GM10248 (cell line): ENCODE measurements at regions of chr7 and their contacts with region 1.

Region 1: GRCh38 chr7:100852048-100852872 is at the start of gene SLC12A9:
- DNase-seq: peak; percentile 96
- CTCF ChIP-seq: peak; percentile 90

Region 2: GRCh38 chr7:100793806-100794660 is 58.2 kb before region 1 on chr7:
- CTCF ChIA-PET with region 1: interaction called, 188 read pairs
- POLR2A ChIA-PET with region 1: no interaction called
- DNase-seq: no peak
- CTCF ChIP-seq: no peak

Region 3: DNA sequence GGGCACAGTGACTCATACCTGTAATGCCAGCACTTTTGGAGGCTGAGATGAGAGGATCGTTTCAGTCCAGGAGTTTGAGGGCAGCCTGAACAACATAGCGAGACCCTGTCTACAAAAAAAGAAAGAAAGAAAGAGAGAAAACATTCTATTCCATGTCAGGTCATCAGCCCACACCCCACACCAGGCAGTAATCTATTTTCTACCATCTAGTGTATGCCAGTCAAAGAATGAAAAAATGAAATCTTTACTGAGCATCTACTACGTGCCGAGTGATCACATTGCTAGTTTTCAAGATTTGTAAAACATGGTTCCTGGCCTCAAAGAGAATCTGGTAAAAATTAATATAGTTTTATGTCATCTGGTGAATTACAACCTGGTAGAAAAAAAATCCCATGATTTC is 21.9 kb before region 1 on chr7:
- CTCF ChIA-PET with region 1: interaction called, 19 read pairs
- POLR2A ChIA-PET with region 1: no interaction called
- DNase-seq: no peak
- CTCF ChIP-seq: no peak

Region 4: GRCh38 chr7:100874577-100875355 is 22.5 kb after region 1 on chr7 and contains the start of gene SRRT:
- CTCF ChIA-PET with region 1: interaction called, 15 read pairs
- POLR2A ChIA-PET with region 1: interaction called, 6 read pairs
- DNase-seq: peak; percentile 99
- CTCF ChIP-seq: no peak

Region 5: DNA sequence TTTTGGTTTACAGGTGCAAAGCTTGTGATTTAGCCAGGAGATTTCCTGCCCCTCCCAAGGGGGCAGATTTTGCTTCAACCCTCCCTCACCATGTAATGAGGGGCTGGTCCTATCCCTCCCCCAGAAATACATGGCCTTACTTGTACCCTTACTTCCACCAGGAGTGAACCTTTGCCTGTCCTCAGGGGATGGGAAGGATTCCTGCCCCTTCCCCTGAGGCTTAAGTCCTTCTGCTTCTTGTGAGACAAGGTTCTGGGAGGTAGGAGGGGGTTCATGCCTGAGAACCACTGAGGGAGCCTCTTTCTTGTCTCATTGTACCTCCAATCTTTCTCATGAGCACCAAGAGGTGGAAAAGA is 77.5 kb after region 1 on chr7:
- CTCF ChIA-PET with region 1: no interaction called
- POLR2A ChIA-PET with region 1: no interaction called
- DNase-seq: no peak
- CTCF ChIP-seq: no peak

Region 6: GRCh38 chr7:100965723-100966541 is 113.7 kb after region 1 on chr7:
- CTCF ChIA-PET with region 1: no interaction called
- POLR2A ChIA-PET with region 1: no interaction called
- DNase-seq: peak; percentile 97
- CTCF ChIP-seq: peak; percentile 99